ENCODE measurements at regions of chr7 and their contacts with region 1.

Region 1: DNA sequence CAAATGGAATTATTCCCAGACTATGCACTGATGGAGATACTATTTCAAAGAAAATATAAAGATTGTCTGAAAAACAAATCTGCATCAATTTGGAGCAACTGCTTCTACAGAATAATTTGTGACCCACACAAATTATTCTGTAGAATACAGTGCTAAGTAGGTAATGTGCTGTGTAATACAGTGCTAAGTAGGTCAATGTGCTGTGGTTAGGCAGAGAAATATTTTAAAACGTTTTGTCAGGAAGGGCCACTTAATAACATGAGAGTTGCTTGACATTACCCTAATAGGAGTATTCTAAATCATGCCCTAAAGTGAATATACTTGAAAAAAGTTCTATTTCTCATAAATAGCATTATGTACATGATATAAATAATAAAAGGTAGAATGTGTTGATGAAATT is 116.5 kb upstream of the KCND2 start:
- DNase-seq: no peak
- H3K4me3 ChIP-seq: no peak overlapping the region
- H3K27ac ChIP-seq: no peak overlapping the region
- H3K4me1 ChIP-seq: no peaks in the 10 kb centered on the region
- H3K27me3 ChIP-seq: no peaks in the 10 kb centered on the region
- CTCF ChIP-seq: no peak

Region 2: GRCh38 chr7:119996634-119997033 is 159.8 kb before region 1 on chr7:
- CTCF ChIA-PET with region 1: no interaction called
- POLR2A ChIA-PET with region 1: no interaction called
- intact Hi-C with region 1: no loop called
- DNase-seq: peak in 1 of 2 experiments; percentile 52
- H3K4me3 ChIP-seq: no peak overlapping the region
- H3K27ac ChIP-seq: no peak overlapping the region
- H3K4me1 ChIP-seq: no peaks in the 10 kb centered on the region
- H3K27me3 ChIP-seq: no peaks in the 10 kb centered on the region
- CTCF ChIP-seq: no peak

Region 3: DNA sequence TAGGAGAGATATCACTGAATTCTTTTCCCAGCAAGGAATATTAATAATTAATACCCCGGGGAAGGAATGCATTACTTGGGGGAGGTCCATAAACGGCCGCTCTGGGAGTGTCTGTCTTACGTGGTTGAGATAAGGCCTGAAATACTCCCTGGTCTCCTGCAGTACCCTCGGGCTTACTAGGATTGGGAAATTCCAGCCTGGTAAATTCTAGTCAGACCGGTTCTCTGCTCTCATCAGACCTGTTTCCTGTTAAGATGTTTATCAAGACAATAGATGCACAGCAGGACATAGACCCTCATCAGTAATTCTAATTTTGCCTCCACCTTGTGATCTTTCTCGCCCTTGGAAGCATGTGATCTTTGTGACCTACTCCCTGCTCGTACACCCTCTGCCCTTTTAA is 46.3 kb before region 1 on chr7:
- CTCF ChIA-PET with region 1: no interaction called
- POLR2A ChIA-PET with region 1: no interaction called
- intact Hi-C with region 1: loop called (anchors 5 kb)
- DNase-seq: peak; percentile 25 to 68
- H3K4me3 ChIP-seq: no peak overlapping the region
- H3K27ac ChIP-seq: no peak overlapping the region
- H3K4me1 ChIP-seq: peaks cover 15% of the 10 kb centered on the region
- H3K27me3 ChIP-seq: no peaks in the 10 kb centered on the region
- CTCF ChIP-seq: no peak

Region 4: GRCh38 chr7:120272261-120272660 is 115.8 kb after region 1 on chr7:
- CTCF ChIA-PET with region 1: no interaction called
- POLR2A ChIA-PET with region 1: no interaction called
- intact Hi-C with region 1: no loop called
- DNase-seq: peak; percentile 39 to 44
- H3K4me3 ChIP-seq: peak overlapping the region; percentile 61
- H3K27ac ChIP-seq: no peak overlapping the region
- H3K4me1 ChIP-seq: no peaks in the 10 kb centered on the region
- H3K27me3 ChIP-seq: 0 out of 2 replicates have a peak, but pooled peaks cover 4% of the 10 kb centered on the region
- CTCF ChIP-seq: peak; percentile 83

Measured in PC-9 (cell line).